BJ (cell line): ENCODE measurements at regions of chr2 and their contacts with region 1.

Region 1: GRCh38 chr2:133844214-133844892 is 276.1 kb upstream of the NCKAP5 start:
- DNase-seq: peak; percentile 9
- H3K4me3 ChIP-seq: no peak overlapping the region
- H3K27me3 ChIP-seq: no peaks in the 10 kb centered on the region
- CTCF ChIP-seq: peak; percentile 90

Region 2: DNA sequence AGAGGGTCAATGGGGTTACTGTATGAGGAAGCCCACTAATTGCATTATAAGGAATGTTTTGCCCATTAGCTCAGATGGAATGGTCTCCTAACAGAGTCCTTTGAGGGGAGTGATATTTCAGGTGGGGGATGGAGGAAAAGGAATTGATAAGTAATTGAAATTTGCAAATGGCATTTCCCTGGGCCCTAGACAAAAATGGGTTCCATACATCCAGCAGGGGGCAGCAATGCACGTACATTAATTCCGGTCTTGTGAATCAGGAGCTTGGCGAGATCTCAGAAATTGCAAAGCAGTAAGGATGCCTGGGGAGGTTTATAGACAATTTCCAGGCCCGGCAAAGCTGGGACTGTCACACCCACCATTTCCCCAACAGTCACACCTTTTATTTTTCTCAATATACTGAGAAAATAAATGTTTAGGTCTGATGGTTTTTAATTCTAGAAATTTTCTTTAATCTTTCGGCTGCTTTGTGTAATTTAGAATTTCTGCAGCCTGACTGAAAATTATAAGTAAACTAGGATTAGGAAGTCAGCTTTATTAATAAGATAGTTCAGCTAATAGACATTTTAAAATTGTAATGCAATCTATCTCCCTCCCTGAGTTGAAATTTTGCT is 1297.2 kb before region 1 on chr2:
- CTCF ChIA-PET with region 1: interaction called, 25 read pairs
- POLR2A ChIA-PET with region 1: no interaction called
- DNase-seq: peak; percentile 10
- H3K4me3 ChIP-seq: no peak overlapping the region
- H3K27me3 ChIP-seq: no peaks in the 10 kb centered on the region
- CTCF ChIP-seq: peak; percentile 60

Region 3: GRCh38 chr2:133561045-133561852 is 283.1 kb before region 1 on chr2:
- CTCF ChIA-PET with region 1: interaction called, 13 read pairs
- POLR2A ChIA-PET with region 1: no interaction called
- DNase-seq: no peak
- H3K4me3 ChIP-seq: no peak overlapping the region
- H3K27me3 ChIP-seq: no peaks in the 10 kb centered on the region
- CTCF ChIP-seq: peak; percentile 70

Region 4: DNA sequence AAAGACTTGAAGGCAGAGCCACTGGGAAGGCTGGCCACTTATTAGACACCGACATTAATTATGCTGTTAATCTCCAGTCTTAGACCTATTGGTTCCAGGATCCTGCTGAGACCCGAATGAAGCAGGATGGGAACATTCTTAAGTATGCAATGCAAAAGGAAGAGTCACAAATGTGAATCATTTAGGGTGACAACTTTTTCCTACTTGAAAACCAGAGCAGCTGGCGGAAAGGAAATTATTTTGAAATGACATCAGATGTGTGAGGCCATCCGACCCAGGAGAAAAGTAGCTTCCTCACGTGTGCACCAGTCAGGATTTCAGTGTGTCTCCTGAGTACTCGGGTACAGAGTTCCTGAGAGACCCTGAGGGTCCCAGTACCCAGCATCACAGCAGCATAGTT is 53.2 kb before region 1 on chr2:
- CTCF ChIA-PET with region 1: interaction called, 15 read pairs
- POLR2A ChIA-PET with region 1: no interaction called
- DNase-seq: peak; percentile 59
- H3K4me3 ChIP-seq: no peak overlapping the region
- H3K27me3 ChIP-seq: no peaks in the 10 kb centered on the region
- CTCF ChIP-seq: no peak

Region 5: DNA sequence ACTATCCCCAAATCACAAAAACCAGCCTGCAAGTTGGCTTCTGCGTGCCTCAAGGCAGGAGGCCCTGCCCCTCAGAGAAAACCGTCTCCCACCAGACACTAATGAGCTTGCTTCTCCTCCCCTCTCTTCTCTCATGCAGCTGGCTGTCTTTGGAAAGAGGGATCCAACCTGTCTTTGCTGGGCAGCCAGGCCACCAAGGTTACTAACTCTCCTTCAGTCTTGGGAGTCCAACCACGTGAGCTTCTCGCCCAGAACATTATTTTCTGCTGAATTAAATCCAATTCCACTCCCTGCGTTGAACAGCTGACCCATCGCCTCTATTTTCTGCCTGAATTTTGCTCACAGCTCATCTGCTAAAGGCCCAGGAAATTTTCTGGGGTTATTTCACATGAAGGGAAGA is 15.2 kb after region 1 on chr2:
- CTCF ChIA-PET with region 1: interaction called, 16 read pairs
- POLR2A ChIA-PET with region 1: no interaction called
- DNase-seq: no peak
- H3K4me3 ChIP-seq: no peak overlapping the region
- H3K27me3 ChIP-seq: peaks cover 4% of the 10 kb centered on the region
- CTCF ChIP-seq: no peak

Region 6: GRCh38 chr2:134079373-134079772 is 235.0 kb after region 1 on chr2:
- CTCF ChIA-PET with region 1: no interaction called
- POLR2A ChIA-PET with region 1: no interaction called
- DNase-seq: no peak
- H3K4me3 ChIP-seq: no peak overlapping the region
- H3K27me3 ChIP-seq: peaks cover 6% of the 10 kb centered on the region
- CTCF ChIP-seq: no peak